T-cell (primary cell): ENCODE measurements at regions of chr9 and their contacts with region 1.

Region 1: DNA sequence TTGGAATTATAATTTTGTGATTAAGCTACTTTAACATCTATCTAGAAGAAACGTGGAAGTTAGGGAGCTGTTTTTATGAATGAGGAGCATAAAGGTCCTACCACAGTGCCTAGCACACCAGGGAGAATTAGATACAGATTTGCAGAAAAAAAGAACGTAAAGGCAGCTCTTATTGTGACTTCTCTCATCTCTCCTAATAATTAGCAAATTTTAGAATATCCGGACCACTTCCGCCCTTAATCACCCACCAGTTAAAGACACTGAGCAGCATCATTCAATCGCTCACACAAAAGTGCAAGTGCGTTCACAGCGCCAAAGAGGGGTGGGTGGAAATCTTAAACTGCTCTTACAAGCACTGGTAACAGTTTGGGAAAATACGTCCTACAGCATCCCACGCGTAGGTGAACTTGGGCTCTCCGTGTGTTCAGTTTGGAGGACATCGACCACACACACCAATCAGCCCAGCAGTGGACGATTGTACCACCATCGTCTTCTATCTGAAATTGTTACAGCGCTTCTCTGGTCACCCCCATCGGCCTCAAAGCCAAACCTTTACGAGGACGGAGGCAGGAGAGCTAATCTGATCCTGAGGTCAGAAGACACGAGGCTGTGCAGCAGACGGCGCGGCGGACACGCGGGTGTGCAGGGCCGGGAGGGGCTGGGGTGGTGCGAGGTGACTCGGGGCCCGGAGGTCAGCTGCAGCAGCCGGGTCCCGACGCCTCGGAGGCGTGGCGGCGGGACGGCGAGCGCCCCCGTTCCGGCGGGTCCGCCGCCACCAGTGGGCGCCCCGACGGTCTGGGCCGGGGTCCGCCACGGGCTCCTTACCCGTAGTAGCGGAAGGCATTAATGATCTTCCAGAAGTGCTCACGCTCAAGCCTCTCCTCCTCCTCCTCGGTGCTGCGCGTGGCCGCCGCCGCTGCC is 646 bp downstream of the CARNMT1 start:
- DNase-seq: peak in 24 of 35 experiments; percentile 1 to 61 (median 15)
- ATAC-seq: peak in 3 of 4 experiments; percentile 26 to 33 (median 26)
- H3K4me3 ChIP-seq: peak overlapping the region; percentile 67 to 76
- H3K4me3 Mint-ChIP-seq: peak overlapping the region; percentile 87 to 98 (median 95)
- H3K27ac ChIP-seq: peak overlapping the region; percentile 76
- H3K27ac Mint-ChIP-seq: peak overlapping the region; percentile 94
- H3K4me1 ChIP-seq: peaks cover 18 to 28% of the 10 kb centered on the region in 2 experiments
- H3K4me1 Mint-ChIP-seq: peaks cover 45 to 57% (median 47%) of the 10 kb centered on the region in 3 donors
- H3K27me3 ChIP-seq: no peaks in the 10 kb centered on the region
- H3K27me3 Mint-ChIP-seq: no peaks in the 10 kb centered on the region

Region 2: GRCh38 chr9:74952281-74953151 is 74.9 kb before region 1 on chr9 and contains the start of gene C9orf40:
- CTCF ChIA-PET with region 1: interaction called, 20 to 22 read pairs
- POLR2A ChIA-PET with region 1: interaction called in 1 of 2 experiments, 11 read pairs
- DNase-seq: peak; percentile 77 to 94 (median 88)
- ATAC-seq: peak; percentile 89 to 95 (median 93)
- H3K4me3 ChIP-seq: peak within 1 kb of the TSS; percentile 85 to 92
- H3K4me3 Mint-ChIP-seq: peak within 1 kb of the TSS; percentile 91 to 97 (median 91)
- H3K27ac ChIP-seq: peak within 1 kb of the TSS; percentile 88
- H3K27ac Mint-ChIP-seq: peak within 1 kb of the TSS; percentile 94 to 95
- H3K4me1 ChIP-seq: peaks cover 0 to 12% of the 10 kb centered on the region in 2 experiments
- H3K4me1 Mint-ChIP-seq: peaks cover 16 to 24% (median 17%) of the 10 kb centered on the region in 3 donors
- H3K27me3 ChIP-seq: no peaks in the 10 kb centered on the region
- H3K27me3 Mint-ChIP-seq: no peaks in the 10 kb centered on the region
- total RNA-seq, gene C9orf40: 2.1 to 6.9 (median 5.9) TPM

Region 3: GRCh38 chr9:75001719-75002422 is 25.6 kb before region 1 on chr9:
- CTCF ChIA-PET with region 1: interaction called, 3 to 14 read pairs
- POLR2A ChIA-PET with region 1: interaction called in 1 of 2 experiments, 3 read pairs
- DNase-seq: peak in 7 of 35 experiments; percentile 4 to 89 (median 12)
- ATAC-seq: peak; percentile 76 to 91 (median 82)
- H3K4me3 ChIP-seq: no peak overlapping the region
- H3K4me3 Mint-ChIP-seq: no peak overlapping the region
- H3K27ac ChIP-seq: no peak overlapping the region
- H3K27ac Mint-ChIP-seq: no peak overlapping the region
- H3K4me1 ChIP-seq: no peaks in the 10 kb centered on the region
- H3K4me1 Mint-ChIP-seq: peaks cover 5 to 11% (median 5%) of the 10 kb centered on the region in 3 donors
- H3K27me3 ChIP-seq: no peaks in the 10 kb centered on the region
- H3K27me3 Mint-ChIP-seq: no peaks in the 10 kb centered on the region

Region 4: DNA sequence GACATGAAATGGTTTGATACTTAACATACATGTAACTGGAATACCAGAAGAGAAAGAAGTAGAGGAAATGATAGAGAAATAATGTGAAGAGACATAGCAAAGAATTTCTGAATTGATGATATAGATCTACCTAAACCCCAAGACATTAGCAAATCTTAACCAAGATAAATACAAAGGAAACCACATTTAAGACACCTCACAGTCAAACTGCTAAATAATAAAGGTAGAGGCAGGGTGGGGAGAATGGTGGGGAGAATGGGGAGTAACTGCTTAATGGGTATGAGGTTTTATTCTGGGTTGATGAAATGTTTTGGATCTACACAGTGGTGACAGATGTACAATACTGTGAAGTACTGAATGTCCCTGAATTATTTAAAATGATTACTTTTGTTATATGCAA is 16.9 kb before region 1 on chr9:
- CTCF ChIA-PET with region 1: interaction called, 14 to 15 read pairs
- POLR2A ChIA-PET with region 1: interaction called in 1 of 2 experiments, 3 read pairs
- DNase-seq: peak in 1 of 35 experiments; percentile 13
- ATAC-seq: peak; percentile 42 to 71 (median 56)
- H3K4me3 ChIP-seq: no peak overlapping the region
- H3K4me3 Mint-ChIP-seq: no peak overlapping the region
- H3K27ac ChIP-seq: no peak overlapping the region
- H3K27ac Mint-ChIP-seq: peak overlapping the region in 1 of 2 donors; percentile 35
- H3K4me1 ChIP-seq: peaks cover 8 to 15% of the 10 kb centered on the region in 2 experiments
- H3K4me1 Mint-ChIP-seq: peaks cover 31 to 33% (median 31%) of the 10 kb centered on the region in 3 donors
- H3K27me3 ChIP-seq: no peaks in the 10 kb centered on the region
- H3K27me3 Mint-ChIP-seq: no peaks in the 10 kb centered on the region

Region 5: DNA sequence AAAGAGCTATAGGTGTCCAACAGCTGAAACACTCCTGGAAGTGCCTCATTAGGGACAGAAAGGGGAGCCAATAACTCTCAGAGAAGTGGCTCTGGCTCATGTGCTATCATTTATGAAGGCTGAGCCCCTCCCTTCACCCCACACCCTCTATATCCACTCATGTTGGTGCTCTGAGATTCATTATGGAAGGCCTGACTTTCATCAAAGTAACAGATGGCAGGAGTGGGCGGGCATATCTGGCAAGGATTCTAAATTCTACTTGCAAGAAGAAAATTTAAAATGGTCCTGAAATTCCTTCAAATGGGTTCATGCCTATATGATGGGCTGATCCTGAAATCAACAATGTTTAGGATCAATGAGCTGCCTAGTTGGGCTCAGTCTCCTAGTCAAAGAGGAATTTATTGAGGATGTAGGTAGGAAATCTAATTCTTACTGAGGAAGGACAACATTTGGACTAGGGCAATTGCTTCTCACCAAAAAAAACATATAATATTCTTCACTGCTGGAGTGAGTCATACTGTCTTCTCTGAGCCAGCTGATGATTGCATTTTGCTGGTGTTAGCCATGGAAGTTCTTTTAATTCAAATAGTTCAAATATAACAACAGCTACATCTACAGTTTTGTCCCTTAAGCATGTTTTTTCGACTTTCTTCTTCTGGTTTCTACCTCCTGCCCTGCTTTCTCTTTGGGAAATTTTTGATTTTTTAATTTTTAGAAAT is 37.0 kb after region 1 on chr9:
- CTCF ChIA-PET with region 1: no interaction called
- POLR2A ChIA-PET with region 1: no interaction called
- DNase-seq: no peak
- ATAC-seq: no peak
- H3K4me3 ChIP-seq: no peak overlapping the region
- H3K4me3 Mint-ChIP-seq: no peak overlapping the region
- H3K27ac ChIP-seq: no peak overlapping the region
- H3K27ac Mint-ChIP-seq: peak overlapping the region; percentile 16 to 36
- H3K4me1 ChIP-seq: no peaks in the 10 kb centered on the region
- H3K4me1 Mint-ChIP-seq: peaks cover 2 to 9% (median 6%) of the 10 kb centered on the region in 3 donors
- H3K27me3 ChIP-seq: no peaks in the 10 kb centered on the region
- H3K27me3 Mint-ChIP-seq: no peaks in the 10 kb centered on the region

Region 6: DNA sequence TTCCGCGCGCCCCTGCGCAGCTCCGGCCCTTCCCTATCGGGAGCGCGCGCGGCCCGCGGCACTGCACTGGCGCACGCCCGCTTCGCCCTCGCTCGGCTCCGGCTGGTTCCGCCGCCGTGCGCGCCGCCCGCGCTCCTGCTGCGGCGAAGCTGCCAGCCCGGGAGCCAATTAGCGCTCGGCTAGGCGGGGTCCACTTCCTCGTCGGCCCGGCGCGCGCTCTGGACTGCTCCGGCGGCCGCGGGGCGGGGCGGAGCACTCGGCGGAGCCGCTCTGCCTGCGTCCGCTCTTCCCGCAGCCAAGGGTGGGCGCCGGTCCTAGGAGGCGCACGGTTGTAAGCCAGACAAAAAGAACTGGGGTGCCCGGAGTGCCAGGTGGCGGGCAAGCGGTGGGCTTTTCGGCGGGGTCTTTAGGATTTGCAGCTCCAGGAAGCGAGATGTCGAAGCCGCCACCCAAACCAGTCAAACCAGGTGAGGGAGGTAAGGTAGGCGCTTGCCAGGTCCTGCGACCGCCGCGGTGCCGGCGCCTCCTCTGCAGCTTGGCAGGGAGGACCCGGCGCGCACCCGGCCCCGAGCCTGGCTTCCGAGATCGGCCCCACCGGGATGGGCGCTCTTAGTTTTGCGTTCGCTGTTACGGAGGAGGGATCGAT is 60.9 kb after region 1 on chr9 and contains the start of gene OSTF1:
- CTCF ChIA-PET with region 1: interaction called, 3 to 10 read pairs
- POLR2A ChIA-PET with region 1: interaction called, 3 to 34 read pairs
- DNase-seq: peak; percentile 85 to 97 (median 91)
- ATAC-seq: peak; percentile 87 to 90 (median 90)
- H3K4me3 ChIP-seq: peak within 1 kb of the TSS; percentile 92 to 93
- H3K4me3 Mint-ChIP-seq: peak within 1 kb of the TSS; percentile 96 to 99 (median 99)
- H3K27ac ChIP-seq: peak within 1 kb of the TSS; percentile 90
- H3K27ac Mint-ChIP-seq: peak within 1 kb of the TSS; percentile 95
- H3K4me1 ChIP-seq: peaks cover 48 to 50% of the 10 kb centered on the region in 2 experiments
- H3K4me1 Mint-ChIP-seq: peaks cover 73 to 80% (median 77%) of the 10 kb centered on the region in 3 donors
- H3K27me3 ChIP-seq: no peaks in the 10 kb centered on the region
- H3K27me3 Mint-ChIP-seq: no peaks in the 10 kb centered on the region
- total RNA-seq, gene OSTF1: 46.6 to 73.9 (median 58.3) TPM